ENCODE measurements at regions of chr12 and their contacts with region 1.

Region 1: DNA sequence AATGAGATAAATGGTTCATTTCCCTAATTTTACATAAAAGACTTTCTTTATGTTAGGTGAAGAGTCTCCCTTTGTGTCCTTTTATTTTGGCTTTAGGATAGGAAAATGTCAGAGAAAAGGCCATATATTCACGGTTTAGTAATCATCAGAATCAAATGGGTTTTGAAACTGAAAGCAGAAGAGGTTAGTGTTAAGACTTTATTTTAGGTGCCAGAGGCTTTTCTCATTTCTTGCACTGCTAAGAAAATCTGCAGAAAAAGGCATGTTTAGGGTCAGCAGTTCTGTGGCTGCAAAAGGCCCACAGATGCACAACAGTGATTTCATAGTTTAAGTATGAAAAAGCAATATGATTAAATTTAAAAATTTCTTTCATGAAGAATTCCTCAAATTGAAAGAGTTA is 80.4 kb upstream of the SINHCAF start:
- DNase-seq: no peak
- H3K4me3 ChIP-seq: no peak overlapping the region
- H3K27ac ChIP-seq: no peak overlapping the region
- H3K4me1 ChIP-seq: no peaks in the 10 kb centered on the region
- H3K27me3 ChIP-seq: no peaks in the 10 kb centered on the region
- CTCF ChIP-seq: no peak
- POLR2A ChIP-seq: no peak

Region 2: DNA sequence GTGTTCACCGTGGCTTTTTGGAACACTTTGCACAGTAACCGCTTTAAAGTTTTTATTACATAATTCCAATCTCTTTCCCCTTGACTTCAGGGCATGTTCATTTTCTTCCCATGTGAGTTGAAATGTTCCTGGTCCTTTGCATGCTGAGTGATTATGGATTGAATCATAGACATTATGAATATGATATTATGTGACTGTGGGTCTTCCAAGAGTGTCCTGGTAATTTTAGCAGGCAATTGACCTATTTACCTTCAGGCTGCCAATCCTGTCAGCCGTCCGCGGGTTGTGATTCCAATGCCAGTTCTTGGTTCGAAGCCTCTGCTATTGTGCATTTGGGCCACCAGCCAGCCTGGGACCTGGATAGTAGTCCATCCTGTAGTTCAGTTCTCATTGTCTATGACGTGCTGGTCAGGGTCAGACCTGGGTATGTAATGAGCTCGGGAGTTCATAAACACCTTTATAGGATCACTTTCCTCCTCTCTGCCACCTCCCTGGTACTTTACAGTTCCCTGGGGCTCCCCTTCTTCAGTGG is 365.2 kb before region 1 on chr12:
- CTCF ChIA-PET with region 1: no interaction called
- POLR2A ChIA-PET with region 1: no interaction called
- dilution Hi-C with region 1: no loop called
- intact Hi-C with region 1: no loop called
- DNase-seq: no peak
- H3K4me3 ChIP-seq: no peak overlapping the region
- H3K27ac ChIP-seq: no peak overlapping the region
- H3K4me1 ChIP-seq: no peaks in the 10 kb centered on the region
- H3K27me3 ChIP-seq: peaks cover 6 to 10% of the 10 kb centered on the region in 2 experiments
- CTCF ChIP-seq: no peak
- POLR2A ChIP-seq: no peak

Region 3: DNA sequence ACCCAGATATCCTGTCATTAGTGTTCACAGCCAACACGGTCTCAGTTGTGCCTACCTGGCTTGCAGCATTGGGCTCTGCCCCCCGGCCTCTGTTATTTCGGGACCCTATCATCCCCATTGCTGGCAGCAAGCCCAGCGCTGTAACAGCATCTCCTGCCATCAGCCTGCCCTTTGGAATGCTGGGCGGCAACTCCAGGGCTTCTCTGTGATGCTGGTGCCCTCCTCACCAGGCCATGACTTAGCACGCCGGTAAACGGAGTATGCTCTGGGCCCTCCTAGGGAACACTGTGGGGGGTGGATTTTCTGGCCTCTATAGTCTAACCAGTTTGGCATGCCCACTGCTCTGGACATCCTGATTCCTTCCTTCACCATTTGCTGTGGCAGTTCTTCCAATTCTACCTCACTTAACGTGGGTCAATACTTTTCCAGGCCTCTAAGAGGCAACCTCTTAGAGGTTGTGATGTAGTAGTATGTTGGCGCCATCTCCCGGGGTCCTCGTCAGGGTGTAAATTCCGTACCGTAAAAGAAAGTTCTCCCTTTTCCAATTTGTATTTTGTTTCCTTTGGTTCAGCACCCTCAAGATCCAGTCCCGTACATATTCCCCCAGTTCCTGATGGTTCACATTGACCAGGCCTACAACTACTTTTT is 160.4 kb before region 1 on chr12:
- CTCF ChIA-PET with region 1: interaction called, 17 read pairs
- POLR2A ChIA-PET with region 1: no interaction called
- dilution Hi-C with region 1: no loop called
- intact Hi-C with region 1: loop called (anchors 10 kb)
- DNase-seq: no peak
- H3K4me3 ChIP-seq: no peak overlapping the region
- H3K27ac ChIP-seq: no peak overlapping the region
- H3K4me1 ChIP-seq: no peaks in the 10 kb centered on the region
- H3K27me3 ChIP-seq: peaks cover 0 to 3% of the 10 kb centered on the region in 2 experiments
- CTCF ChIP-seq: no peak
- POLR2A ChIP-seq: no peak

Region 4: DNA sequence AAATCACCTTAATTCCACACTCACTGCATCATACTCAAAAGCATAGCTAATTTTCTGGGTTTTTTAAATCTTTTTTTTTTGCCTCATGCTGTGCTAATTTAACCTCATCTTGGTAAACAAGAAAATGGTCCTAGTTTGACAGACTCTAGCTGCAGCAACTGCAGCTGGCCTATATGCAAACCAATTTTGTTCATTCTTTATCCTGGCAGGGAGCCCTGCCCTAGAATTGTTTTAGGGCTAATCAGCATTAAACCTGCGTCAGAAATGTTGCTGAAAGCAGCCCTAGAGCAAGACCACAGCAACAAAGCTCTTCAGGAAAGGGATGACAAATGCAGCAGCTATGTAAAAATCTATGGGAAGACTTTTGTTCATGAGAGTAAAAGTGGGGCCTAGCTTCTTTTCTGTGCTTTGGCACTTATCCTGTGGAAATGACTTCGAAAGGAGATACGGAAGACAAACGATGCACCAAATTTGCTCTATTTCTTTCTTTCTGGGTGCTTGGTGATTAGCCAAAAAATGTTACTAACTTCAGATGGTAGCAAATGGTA is 112.4 kb after region 1 on chr12:
- CTCF ChIA-PET with region 1: interaction called, 19 read pairs
- POLR2A ChIA-PET with region 1: no interaction called
- dilution Hi-C with region 1: no loop called
- intact Hi-C with region 1: no loop called
- DNase-seq: peak; percentile 99
- H3K4me3 ChIP-seq: no peak overlapping the region
- H3K27ac ChIP-seq: peak overlapping the region; percentile 97
- H3K4me1 ChIP-seq: peaks cover 41% of the 10 kb centered on the region
- H3K27me3 ChIP-seq: no peaks in the 10 kb centered on the region
- CTCF ChIP-seq: no peak
- POLR2A ChIP-seq: no peak

Region 5: GRCh38 chr12:31629756-31630732 is 223.7 kb after region 1 on chr12:
- CTCF ChIA-PET with region 1: interaction called, 140 read pairs
- POLR2A ChIA-PET with region 1: no interaction called
- dilution Hi-C with region 1: no loop called
- intact Hi-C with region 1: no loop called
- DNase-seq: peak; percentile 77
- H3K4me3 ChIP-seq: no peak overlapping the region
- H3K27ac ChIP-seq: no peak overlapping the region
- H3K4me1 ChIP-seq: peaks cover 5% of the 10 kb centered on the region
- H3K27me3 ChIP-seq: no peaks in the 10 kb centered on the region
- CTCF ChIP-seq: no peak
- POLR2A ChIP-seq: no peak

Region 6: GRCh38 chr12:31647086-31647491 is 240.7 kb after region 1 on chr12:
- CTCF ChIA-PET with region 1: interaction called, 35 read pairs
- POLR2A ChIA-PET with region 1: no interaction called
- dilution Hi-C with region 1: no loop called
- intact Hi-C with region 1: no loop called
- DNase-seq: no peak
- H3K4me3 ChIP-seq: no peak overlapping the region
- H3K27ac ChIP-seq: no peak overlapping the region
- H3K4me1 ChIP-seq: no peaks in the 10 kb centered on the region
- H3K27me3 ChIP-seq: no peaks in the 10 kb centered on the region
- CTCF ChIP-seq: no peak
- POLR2A ChIP-seq: no peak

Measured in endothelial cell of umbilical vein (primary cell).